ENCODE measurements at regions of chr4 and their contacts with region 1.

Region 1: GRCh38 chr4:165464813-165465381 is 86.1 kb downstream of the CPE start:
- DNase-seq: no peak
- ATAC-seq: peak; percentile 82
- H3K4me3 ChIP-seq: no peak overlapping the region
- H3K27ac ChIP-seq: no peak overlapping the region
- H3K4me1 ChIP-seq: no peaks in the 10 kb centered on the region
- H3K27me3 ChIP-seq: no peaks in the 10 kb centered on the region
- CTCF ChIP-seq: peak; percentile 62 to 82 (median 69)
- EP300 ChIP-seq: no peak
- POLR2A ChIP-seq: no peak
- RAD21 ChIP-seq: peak; percentile 96

Region 2: GRCh38 chr4:165325732-165326512 is 139.0 kb before region 1 on chr4:
- CTCF ChIA-PET with region 1: no interaction called
- POLR2A ChIA-PET with region 1: no interaction called
- RAD21 ChIA-PET with region 1: no interaction called
- SMC1A ChIA-PET with region 1: no interaction called
- in situ Hi-C with region 1: no loop called
- intact Hi-C with region 1: no loop called
- DNase-seq: no peak
- ATAC-seq: no peak
- H3K4me3 ChIP-seq: peak overlapping the region; percentile 58
- H3K27ac ChIP-seq: no peak overlapping the region
- H3K4me1 ChIP-seq: peaks cover 4% of the 10 kb centered on the region
- H3K27me3 ChIP-seq: no peaks in the 10 kb centered on the region
- CTCF ChIP-seq: no peak
- EP300 ChIP-seq: no peak
- POLR2A ChIP-seq: no peak; the same call in 1 of the 2 replicates
- RAD21 ChIP-seq: no peak

Region 3: DNA sequence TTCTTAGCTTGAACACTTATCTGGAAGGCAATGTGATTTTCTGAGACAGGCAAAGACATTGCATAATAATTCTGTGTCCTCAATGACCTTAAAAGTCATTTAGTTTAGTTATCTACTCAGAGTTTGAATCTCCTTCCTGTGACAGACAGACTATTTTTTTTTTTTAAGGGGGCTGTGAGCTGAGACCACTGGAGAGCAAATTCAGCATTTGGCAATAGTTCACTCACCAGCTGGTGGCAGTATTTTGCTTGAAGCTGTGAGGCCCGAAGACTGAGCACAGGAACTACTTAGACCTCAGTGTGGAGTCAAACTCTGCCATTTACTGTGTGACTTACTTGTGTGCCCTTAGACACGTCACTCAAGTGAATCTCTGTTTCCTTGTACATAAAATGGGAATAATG is 109.0 kb before region 1 on chr4:
- CTCF ChIA-PET with region 1: interaction called, 18 read pairs
- POLR2A ChIA-PET with region 1: no interaction called
- RAD21 ChIA-PET with region 1: interaction called, 4 read pairs
- SMC1A ChIA-PET with region 1: interaction called, 4 read pairs
- in situ Hi-C with region 1: no loop called
- intact Hi-C with region 1: loop called (anchors 1 kb)
- DNase-seq: no peak
- ATAC-seq: peak; percentile 84
- H3K4me3 ChIP-seq: no peak overlapping the region
- H3K27ac ChIP-seq: no peak overlapping the region
- H3K4me1 ChIP-seq: no peaks in the 10 kb centered on the region
- H3K27me3 ChIP-seq: peaks cover 2 to 6% of the 10 kb centered on the region in 2 experiments; a peak in 1 of 4 replicates
- CTCF ChIP-seq: peak; percentile 39 to 48 (median 43); a peak in 5 of 6 replicates
- EP300 ChIP-seq: no peak
- POLR2A ChIP-seq: no peak
- RAD21 ChIP-seq: 0 out of 2 replicates have a peak, but pooled peaks have one; percentile 28

Measured in GM12878 (cell line).